ENCODE measurements at regions of chrX and their contacts with region 1.

Region 1: DNA sequence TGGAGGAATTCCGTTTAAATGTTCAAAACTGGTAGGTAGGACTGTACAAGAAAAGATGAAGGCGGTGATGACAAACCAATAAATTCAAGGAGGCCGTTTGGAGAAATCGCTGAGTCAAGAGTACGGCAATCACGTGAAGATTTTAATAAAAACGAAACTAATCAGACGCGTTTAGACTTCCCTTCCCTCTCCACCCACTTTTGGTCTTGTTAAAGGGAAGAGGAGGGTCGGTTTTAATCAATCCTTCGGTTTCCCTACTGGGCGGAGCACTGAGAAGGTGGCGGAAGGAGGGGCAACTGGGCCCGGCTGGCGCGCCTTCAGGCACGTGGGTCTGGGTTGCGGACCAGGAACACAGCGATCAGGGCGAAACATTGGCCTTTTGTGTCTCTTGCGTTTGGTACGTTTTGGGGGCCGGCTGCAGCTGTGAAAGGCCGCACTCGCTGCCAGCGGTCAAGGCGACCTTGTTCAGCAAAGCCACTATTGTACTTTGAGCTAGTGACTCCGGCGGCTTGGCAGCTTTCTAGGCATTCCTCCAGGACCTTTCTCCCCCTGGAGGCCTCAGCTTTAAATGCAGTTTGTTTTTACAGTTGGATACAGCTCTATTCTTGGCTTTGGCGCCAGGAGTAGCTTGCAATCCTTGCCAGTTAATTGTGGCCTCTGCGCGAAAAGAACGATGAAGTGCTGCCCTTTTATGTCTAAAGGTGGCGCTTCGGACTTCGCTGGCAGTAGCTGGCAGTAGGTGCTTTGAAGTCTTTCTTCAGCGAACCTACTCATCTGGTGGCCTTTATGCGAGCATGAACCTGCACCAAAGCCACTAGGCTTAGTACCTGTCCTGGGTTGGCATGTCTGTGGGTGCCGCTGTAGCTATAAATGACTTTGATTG is 16.8 kb upstream of the LAMP2 start:
- DNase-seq: peak; percentile 81 to 88
- H3K4me3 ChIP-seq: peak overlapping the region; percentile 71
- H3K27ac ChIP-seq: peak overlapping the region; percentile 87
- H3K4me1 ChIP-seq: peaks cover 13% of the 10 kb centered on the region; the same call in 1 of the 2 replicates
- H3K27me3 ChIP-seq: no peaks in the 10 kb centered on the region
- CTCF ChIP-seq: peak; percentile 80

Region 2: DNA sequence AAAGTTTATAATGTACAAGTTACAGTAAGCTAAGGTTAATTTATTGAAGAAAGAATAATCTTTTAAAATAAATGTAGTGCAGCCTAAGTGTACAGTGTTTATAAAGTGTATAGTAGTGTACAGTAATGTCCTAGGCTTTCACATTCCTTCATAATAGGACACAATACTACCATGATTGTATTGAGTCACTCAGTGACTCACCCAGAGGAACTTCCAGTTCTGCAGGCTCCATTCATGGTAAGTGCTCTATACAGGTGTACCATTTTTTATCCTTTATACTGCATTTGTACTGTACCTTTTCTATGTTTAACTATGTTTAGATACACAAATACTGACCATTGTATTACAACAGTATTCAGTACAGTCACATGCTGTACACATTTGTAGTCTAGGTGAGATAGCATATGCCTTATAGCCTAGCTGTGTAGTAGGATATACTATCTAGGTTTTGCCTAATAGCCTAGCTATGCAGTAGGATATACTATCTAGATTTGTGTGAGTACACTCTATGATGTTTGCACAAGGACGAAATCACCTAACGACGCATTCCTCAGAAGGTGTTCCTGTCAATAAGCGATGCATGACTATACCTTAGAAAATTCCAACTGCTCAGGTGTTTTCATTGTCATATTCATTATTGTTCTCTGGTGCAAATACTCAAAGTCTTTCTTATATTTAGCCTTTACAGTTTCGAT is 169.1 kb before region 1 on chrX:
- CTCF ChIA-PET with region 1: no interaction called
- POLR2A ChIA-PET with region 1: no interaction called
- intact Hi-C with region 1: loop called (anchors 5 kb)
- DNase-seq: peak; percentile 60 to 97
- H3K4me3 ChIP-seq: peak overlapping the region; percentile 25; the same call in 1 of the 2 replicates
- H3K27ac ChIP-seq: peak overlapping the region; percentile 85
- H3K4me1 ChIP-seq: peaks cover 41% of the 10 kb centered on the region
- H3K27me3 ChIP-seq: no peaks in the 10 kb centered on the region
- CTCF ChIP-seq: no peak

Region 3: GRCh38 chrX:120380699-120381098 is 105.2 kb before region 1 on chrX:
- CTCF ChIA-PET with region 1: interaction called, 3 read pairs
- POLR2A ChIA-PET with region 1: no interaction called
- intact Hi-C with region 1: loop called (anchors 5 kb)
- DNase-seq: peak in 1 of 2 experiments; percentile 40
- H3K4me3 ChIP-seq: no peak overlapping the region
- H3K27ac ChIP-seq: no peak overlapping the region
- H3K4me1 ChIP-seq: no peaks in the 10 kb centered on the region
- H3K27me3 ChIP-seq: peaks cover 23% of the 10 kb centered on the region; the same call in 1 of the 2 replicates
- CTCF ChIP-seq: peak; percentile 67

Region 4: DNA sequence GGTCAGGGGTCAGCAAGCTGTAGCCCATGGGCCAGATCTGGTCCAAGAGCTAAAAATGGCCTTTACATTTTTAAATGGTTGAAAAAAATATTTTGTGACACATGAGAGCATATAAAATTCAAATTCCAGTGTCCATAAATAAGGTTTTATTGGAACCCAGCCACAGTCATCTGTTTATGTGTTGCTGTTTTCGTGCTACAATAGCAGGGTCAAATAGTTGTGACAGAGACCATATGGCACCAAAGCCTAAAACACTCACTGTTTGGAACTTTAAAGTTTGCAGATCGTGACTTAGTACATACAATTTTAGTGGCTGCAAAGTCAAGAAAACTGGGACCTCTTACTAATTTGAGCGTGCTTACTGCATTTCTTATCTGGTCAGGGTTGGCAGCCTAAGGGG is 46.0 kb before region 1 on chrX:
- CTCF ChIA-PET with region 1: no interaction called
- POLR2A ChIA-PET with region 1: interaction called, 27 read pairs
- intact Hi-C with region 1: no loop called
- DNase-seq: no peak
- H3K4me3 ChIP-seq: no peak overlapping the region
- H3K27ac ChIP-seq: no peak overlapping the region
- H3K4me1 ChIP-seq: no peaks in the 10 kb centered on the region
- H3K27me3 ChIP-seq: no peaks in the 10 kb centered on the region
- CTCF ChIP-seq: no peak

Region 5: GRCh38 chrX:120468825-120469525 is 16.9 kb before region 1 on chrX and contains the start of gene LAMP2:
- CTCF ChIA-PET with region 1: interaction called, 5 read pairs
- POLR2A ChIA-PET with region 1: no interaction called
- intact Hi-C with region 1: loop called (anchors 2 kb)
- DNase-seq: peak; percentile 86 to 91
- H3K4me3 ChIP-seq: peak within 1 kb of the TSS; percentile 81
- H3K27ac ChIP-seq: peak within 1 kb of the TSS; percentile 85
- H3K4me1 ChIP-seq: peaks cover 14% of the 10 kb centered on the region
- H3K27me3 ChIP-seq: no peaks in the 10 kb centered on the region
- CTCF ChIP-seq: no peak
- total RNA-seq, gene LAMP2: 92.4 and 123 TPM in 2 replicates

Region 6: GRCh38 chrX:120566817-120567216 is 80.9 kb after region 1 on chrX:
- CTCF ChIA-PET with region 1: no interaction called
- POLR2A ChIA-PET with region 1: no interaction called
- intact Hi-C with region 1: no loop called
- DNase-seq: no peak
- H3K4me3 ChIP-seq: no peak overlapping the region
- H3K27ac ChIP-seq: no peak overlapping the region
- H3K4me1 ChIP-seq: peaks cover 27% of the 10 kb centered on the region
- H3K27me3 ChIP-seq: no peaks in the 10 kb centered on the region
- CTCF ChIP-seq: no peak

Region 7: DNA sequence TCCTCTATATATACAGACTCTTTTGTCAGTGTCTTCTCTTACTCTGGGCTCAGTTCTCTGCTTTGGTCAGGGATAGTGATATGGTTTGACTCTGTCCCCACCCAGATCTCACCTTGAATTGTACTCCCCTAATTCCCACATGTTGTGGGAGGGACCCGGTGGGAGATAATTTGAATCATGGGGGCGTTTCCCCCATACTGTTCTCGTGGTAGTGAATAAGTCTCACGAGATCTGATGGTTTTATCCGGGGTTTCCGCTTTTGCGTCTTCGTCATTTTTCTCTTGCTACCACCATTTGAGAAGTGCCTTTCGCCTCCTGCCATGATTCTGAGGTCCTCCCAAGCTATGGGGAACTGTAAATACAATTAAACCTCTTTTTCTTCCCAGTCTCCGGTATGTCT is 705.9 kb after region 1 on chrX:
- CTCF ChIA-PET with region 1: no interaction called
- POLR2A ChIA-PET with region 1: no interaction called
- intact Hi-C with region 1: loop called (anchors 5 kb)
- DNase-seq: peak in 1 of 2 experiments; percentile 48
- H3K4me3 ChIP-seq: no peak overlapping the region
- H3K27ac ChIP-seq: no peak overlapping the region
- H3K4me1 ChIP-seq: no peaks in the 10 kb centered on the region
- H3K27me3 ChIP-seq: no peaks in the 10 kb centered on the region
- CTCF ChIP-seq: no peak

Measured in PC-9 (cell line).